ENCODE measurements at regions of chr9 and their contacts with region 1.

Region 1: DNA sequence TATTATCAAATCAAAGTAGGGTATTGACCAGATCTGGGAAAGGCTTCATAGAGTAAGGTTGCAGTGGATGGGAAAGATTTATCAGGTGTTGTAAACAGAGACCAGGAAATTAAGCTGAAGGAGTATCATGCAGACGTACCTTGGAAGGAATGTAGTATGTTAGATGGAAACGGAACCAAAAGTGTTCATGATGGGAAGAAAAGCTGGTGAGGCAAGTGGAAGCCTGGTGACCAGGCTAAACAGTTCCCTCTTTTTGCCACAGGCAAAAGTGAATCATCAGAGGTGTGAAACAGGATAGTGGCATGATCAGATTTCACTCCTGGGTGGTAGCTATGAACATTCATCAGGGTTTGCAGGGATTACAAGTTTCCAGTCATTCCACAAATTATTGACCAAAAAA is 780.1 kb upstream of the DMAC1 start:
- DNase-seq: no peak
- H3K4me3 Mint-ChIP-seq: no peak overlapping the region
- H3K27ac Mint-ChIP-seq: no peak overlapping the region
- H3K4me1 Mint-ChIP-seq: no peaks in the 10 kb centered on the region
- H3K27me3 Mint-ChIP-seq: peaks cover 7% of the 10 kb centered on the region

Region 2: GRCh38 chr9:8643896-8644295 is 64.2 kb after region 1 on chr9:
- CTCF ChIA-PET with region 1: no interaction called
- intact Hi-C with region 1: loop called (anchors 5 kb)
- DNase-seq: no peak
- H3K4me3 Mint-ChIP-seq: no peak overlapping the region
- H3K27ac Mint-ChIP-seq: no peak overlapping the region
- H3K4me1 Mint-ChIP-seq: no peaks in the 10 kb centered on the region
- H3K27me3 Mint-ChIP-seq: peaks cover 1% of the 10 kb centered on the region